Common myeloid progenitor, CD34-positive (primary cell): ENCODE measurements at regions of chr16 and their contacts with region 1.

Region 1: GRCh38 chr16:56295739-56296527 is 104.6 kb downstream of the GNAO1 start:
- DNase-seq: peak; percentile 49 to 90 (median 88)
- H3K4me3 ChIP-seq: peak overlapping the region in 2 of 7 experiments; percentile 13 to 38
- H3K27ac ChIP-seq: peak overlapping the region; percentile 37 to 60
- H3K4me1 ChIP-seq: peaks cover 3 to 74% (median 61%) of the 10 kb centered on the region in 4 experiments
- H3K27me3 ChIP-seq: no peaks in the 10 kb centered on the region

Region 2: GRCh38 chr16:56226187-56226586 is 69.7 kb before region 1 on chr16:
- CTCF ChIA-PET with region 1: no interaction called
- POLR2A ChIA-PET with region 1: no interaction called
- DNase-seq: peak in 2 of 3 donors; percentile 33 to 37
- H3K4me3 ChIP-seq: no peak overlapping the region
- H3K27ac ChIP-seq: no peak overlapping the region
- H3K4me1 ChIP-seq: peaks cover 0 to 12% (median 6%) of the 10 kb centered on the region in 4 experiments
- H3K27me3 ChIP-seq: peaks cover 0 to 3% (median 0%) of the 10 kb centered on the region in 5 experiments

Region 3: GRCh38 chr16:56262148-56262547 is 33.8 kb before region 1 on chr16:
- CTCF ChIA-PET with region 1: interaction called, 11 read pairs
- POLR2A ChIA-PET with region 1: no interaction called
- DNase-seq: peak; percentile 25 to 89 (median 81)
- H3K4me3 ChIP-seq: peak overlapping the region in 3 of 7 experiments; percentile 18 to 45 (median 32)
- H3K27ac ChIP-seq: no peak overlapping the region
- H3K4me1 ChIP-seq: peaks cover 3 to 32% (median 26%) of the 10 kb centered on the region in 4 experiments
- H3K27me3 ChIP-seq: no peaks in the 10 kb centered on the region

Region 4: GRCh38 chr16:56281256-56281805 is 14.6 kb before region 1 on chr16:
- CTCF ChIA-PET with region 1: interaction called, 29 read pairs
- POLR2A ChIA-PET with region 1: no interaction called
- DNase-seq: no peak
- H3K4me3 ChIP-seq: no peak overlapping the region
- H3K27ac ChIP-seq: no peak overlapping the region
- H3K4me1 ChIP-seq: peaks cover 0 to 46% (median 31%) of the 10 kb centered on the region in 4 experiments
- H3K27me3 ChIP-seq: no peaks in the 10 kb centered on the region